ENCODE measurements at regions of chr5 and their contacts with region 1.

Region 1: DNA sequence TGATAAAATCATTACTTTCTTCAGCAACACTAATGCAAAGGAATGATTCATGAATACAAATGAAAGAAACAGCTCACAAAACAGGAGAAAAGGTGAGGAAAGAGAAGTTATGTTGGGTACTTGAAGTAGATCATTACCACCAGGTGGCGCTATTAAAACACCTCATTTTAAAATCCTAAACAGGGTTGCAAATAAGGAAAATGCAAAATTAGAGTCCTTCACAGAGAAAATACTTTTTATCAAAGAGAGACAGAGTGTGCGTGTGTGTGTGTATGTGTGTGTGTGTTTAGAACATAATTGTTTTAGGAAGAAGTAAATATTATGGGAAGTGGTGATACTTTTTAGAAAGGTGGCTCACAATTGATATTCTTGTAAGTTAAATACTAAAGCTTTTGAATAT is 49.5 kb upstream of the CD180 start:
- DNase-seq: no peak
- H3K4me3 Mint-ChIP-seq: no peak overlapping the region
- H3K27ac Mint-ChIP-seq: no peak overlapping the region
- H3K4me1 Mint-ChIP-seq: peaks cover 8% of the 10 kb centered on the region
- H3K27me3 Mint-ChIP-seq: no peaks in the 10 kb centered on the region

Region 2: DNA sequence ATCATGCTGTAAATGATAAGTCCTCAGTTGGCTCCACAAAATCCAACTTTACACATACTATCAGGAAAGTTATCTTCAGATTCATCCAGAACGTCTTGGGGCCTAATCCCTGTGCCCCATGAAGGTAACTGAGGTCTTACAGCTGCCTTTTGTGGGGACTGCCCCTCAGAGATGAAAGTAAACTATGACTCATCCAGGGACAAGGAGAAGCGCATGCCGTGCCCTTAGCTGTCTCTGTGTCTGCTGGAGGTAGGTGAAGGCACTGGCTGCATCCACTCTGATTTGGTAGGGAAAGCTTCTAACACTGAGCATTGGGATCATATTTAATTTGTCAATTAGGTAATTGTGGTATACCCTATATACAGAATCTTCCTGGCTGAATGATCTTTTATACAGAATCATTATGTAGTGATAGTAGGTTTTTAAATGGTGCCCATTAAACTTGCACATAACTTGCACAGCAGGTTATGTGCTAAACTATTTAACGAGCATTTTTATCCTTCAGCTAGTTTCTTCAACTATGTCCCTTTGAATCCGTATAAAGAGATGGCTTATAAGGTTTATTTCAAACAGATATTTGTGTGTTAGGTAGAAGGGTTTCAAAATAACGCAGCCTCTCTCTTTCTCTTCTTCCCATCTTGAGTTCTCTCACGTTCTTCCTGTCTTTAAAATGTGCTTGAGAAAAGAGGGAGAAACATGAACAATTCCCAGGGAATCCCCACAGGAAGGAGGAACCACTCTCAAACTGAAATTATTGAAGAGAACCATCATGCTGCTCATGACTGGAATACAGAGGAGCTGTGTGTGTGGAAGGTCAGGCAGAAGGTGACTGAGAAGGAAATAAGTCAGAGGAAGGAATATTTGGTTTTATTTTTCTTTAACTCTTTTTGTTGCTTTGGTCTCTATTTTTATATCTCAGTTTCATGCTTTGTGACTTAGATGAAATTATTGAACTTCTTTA is 300.4 kb before region 1 on chr5:
- CTCF ChIA-PET with region 1: no interaction called
- POLR2A ChIA-PET with region 1: no interaction called
- intact Hi-C with region 1: no loop called
- DNase-seq: peak; percentile 56
- H3K4me3 Mint-ChIP-seq: no peak overlapping the region
- H3K27ac Mint-ChIP-seq: no peak overlapping the region
- H3K4me1 Mint-ChIP-seq: peaks cover 8% of the 10 kb centered on the region
- H3K27me3 Mint-ChIP-seq: peaks cover 28% of the 10 kb centered on the region

Region 3: DNA sequence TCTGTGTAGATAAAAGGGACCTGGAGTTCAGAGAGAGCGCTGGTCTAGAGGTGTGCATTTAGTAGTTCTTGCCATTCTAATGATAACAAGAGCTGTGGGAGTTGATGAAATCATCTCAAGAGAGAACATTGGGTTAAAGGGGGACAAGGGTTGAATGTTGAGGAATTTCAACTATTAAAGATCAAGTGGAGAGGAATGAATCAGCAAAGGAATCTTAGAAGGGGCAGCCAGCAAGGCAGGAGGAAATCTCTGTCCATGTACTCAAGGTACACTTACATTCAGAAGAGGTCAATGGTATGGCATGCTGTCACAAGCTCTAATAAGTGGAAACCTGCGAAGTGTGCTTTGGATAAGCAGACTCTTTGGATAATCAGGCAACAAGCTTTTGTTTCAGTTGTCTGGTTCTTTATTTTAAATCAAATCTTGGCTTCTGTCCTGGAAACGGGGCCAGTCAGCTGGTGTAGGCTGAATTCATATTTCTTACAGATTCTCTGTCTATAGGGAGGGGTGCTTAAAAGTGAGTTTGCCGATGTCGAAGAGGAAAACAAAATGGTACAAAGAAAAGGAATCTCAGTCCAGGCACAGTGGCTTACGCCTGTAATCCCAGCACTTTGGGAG is 270.9 kb after region 1 on chr5:
- CTCF ChIA-PET with region 1: interaction called, 3 read pairs
- POLR2A ChIA-PET with region 1: no interaction called
- intact Hi-C with region 1: loop called (anchors 10 kb)
- DNase-seq: no peak
- H3K4me3 Mint-ChIP-seq: no peak overlapping the region
- H3K27ac Mint-ChIP-seq: no peak overlapping the region
- H3K4me1 Mint-ChIP-seq: peaks cover 41% of the 10 kb centered on the region
- H3K27me3 Mint-ChIP-seq: no peaks in the 10 kb centered on the region

Region 4: DNA sequence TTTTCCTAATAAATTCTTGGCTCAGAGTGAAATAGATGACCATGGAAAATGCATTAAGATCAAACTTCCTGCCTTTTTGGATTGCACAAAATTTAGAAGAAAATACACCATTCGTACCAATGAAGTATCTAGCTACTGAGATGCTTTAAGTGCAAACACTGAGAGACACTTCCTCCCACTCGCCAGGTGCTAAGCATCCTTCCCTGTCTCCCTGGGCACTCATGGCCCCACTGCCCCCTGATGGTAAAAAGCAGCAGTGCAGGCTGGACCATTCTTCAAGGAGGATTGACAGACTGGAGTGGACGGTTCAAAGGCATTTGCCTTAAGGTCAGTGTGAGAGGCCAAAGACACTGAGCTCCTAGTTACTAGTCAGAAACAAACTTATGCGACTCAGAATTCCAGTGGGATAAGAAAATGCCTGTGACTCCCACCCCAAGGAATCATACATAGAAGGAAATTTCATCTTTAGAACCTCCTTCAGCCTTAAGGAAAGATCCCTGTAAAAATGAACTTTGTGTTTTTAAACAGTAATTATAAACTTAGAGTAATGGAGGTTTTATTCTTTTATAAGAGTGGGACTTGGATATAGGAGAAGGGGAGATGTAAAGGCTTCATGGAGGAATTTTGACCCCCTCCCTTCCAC is 1761.7 kb after region 1 on chr5:
- CTCF ChIA-PET with region 1: interaction called, 7 read pairs
- POLR2A ChIA-PET with region 1: no interaction called
- intact Hi-C with region 1: loop called (anchors 2 kb)
- DNase-seq: peak; percentile 82
- H3K4me3 Mint-ChIP-seq: no peak overlapping the region
- H3K27ac Mint-ChIP-seq: no peak overlapping the region
- H3K4me1 Mint-ChIP-seq: no peaks in the 10 kb centered on the region
- H3K27me3 Mint-ChIP-seq: peaks cover 21% of the 10 kb centered on the region

Measured in activated CD4-positive, alpha-beta memory T cell treated with anti-CD3 and anti-CD28 coated beads for 36 hours (primary cell).